Head of caudate nucleus (tissue), 42 donors: ENCODE measurements at regions of chr1 and their contacts with region 1.

Region 1: GRCh38 chr1:100895540-100896483 is at the start of gene SLC30A7:
- DNase-seq: peak; percentile 88 to 98 (median 96)

Region 2: GRCh38 chr1:100037927-100038659 is 857.7 kb before region 1 on chr1:
- intact Hi-C with region 1: loop called (anchors 10 kb)
- DNase-seq: peak; percentile 72 to 96 (median 92)